Stomach (tissue), 19 donors: ENCODE measurements at regions of chr12 and their contacts with region 1.

Region 1: DNA sequence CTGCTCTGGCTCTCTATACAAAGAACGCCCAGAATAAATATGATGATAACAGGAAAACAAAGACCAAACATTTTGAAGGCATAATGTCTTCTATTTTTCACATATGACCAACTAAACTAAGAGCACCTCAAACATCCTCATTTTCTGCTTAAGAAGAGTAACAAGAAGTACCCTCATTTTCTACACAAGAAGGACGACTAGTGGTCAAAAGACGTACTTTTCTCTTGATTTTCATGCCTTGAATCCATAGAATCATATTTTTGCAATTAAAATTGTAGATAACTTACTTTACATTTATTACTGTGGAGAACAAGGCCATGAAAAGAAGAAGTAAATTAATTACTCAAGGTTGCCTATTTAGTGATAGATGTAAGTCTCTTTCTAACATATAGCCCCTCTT is 358.6 kb downstream of the DUSP6 start:
- DNase-seq: peak in 1 of 2 donors; percentile 80
- H3K4me3 ChIP-seq: no peak overlapping the region
- H3K27ac ChIP-seq: no peak overlapping the region
- H3K4me1 ChIP-seq: peaks cover 0 to 11% (median 0%) of the 10 kb centered on the region in 4 donors
- H3K27me3 ChIP-seq: no peaks in the 10 kb centered on the region
- CTCF ChIP-seq: peak in 5 of 7 experiments; percentile 43 to 71 (median 56)
- EP300 ChIP-seq: no peak
- POLR2A ChIP-seq: no peak

Region 2: GRCh38 chr12:88153959-88154358 is 839.7 kb before region 1 on chr12:
- intact Hi-C with region 1: loop called (anchors 10 kb)
- DNase-seq: peak in 1 of 2 donors; percentile 54
- H3K4me3 ChIP-seq: no peak overlapping the region
- H3K27ac ChIP-seq: no peak overlapping the region
- H3K4me1 ChIP-seq: peaks cover 0 to 8% (median 2%) of the 10 kb centered on the region in 4 donors
- H3K27me3 ChIP-seq: no peaks in the 10 kb centered on the region
- CTCF ChIP-seq: peak in 4 of 7 experiments; percentile 11 to 27 (median 16)
- EP300 ChIP-seq: no peak
- POLR2A ChIP-seq: no peak

Region 3: GRCh38 chr12:89768586-89769486 is 775.2 kb after region 1 on chr12:
- intact Hi-C with region 1: no loop called
- DNase-seq: peak in 1 of 2 donors; percentile 12
- H3K4me3 ChIP-seq: no peak overlapping the region
- H3K27ac ChIP-seq: no peak overlapping the region
- H3K4me1 ChIP-seq: no peaks in the 10 kb centered on the region
- H3K27me3 ChIP-seq: no peaks in the 10 kb centered on the region
- CTCF ChIP-seq: no peak
- EP300 ChIP-seq: no peak
- POLR2A ChIP-seq: no peak

Region 4: DNA sequence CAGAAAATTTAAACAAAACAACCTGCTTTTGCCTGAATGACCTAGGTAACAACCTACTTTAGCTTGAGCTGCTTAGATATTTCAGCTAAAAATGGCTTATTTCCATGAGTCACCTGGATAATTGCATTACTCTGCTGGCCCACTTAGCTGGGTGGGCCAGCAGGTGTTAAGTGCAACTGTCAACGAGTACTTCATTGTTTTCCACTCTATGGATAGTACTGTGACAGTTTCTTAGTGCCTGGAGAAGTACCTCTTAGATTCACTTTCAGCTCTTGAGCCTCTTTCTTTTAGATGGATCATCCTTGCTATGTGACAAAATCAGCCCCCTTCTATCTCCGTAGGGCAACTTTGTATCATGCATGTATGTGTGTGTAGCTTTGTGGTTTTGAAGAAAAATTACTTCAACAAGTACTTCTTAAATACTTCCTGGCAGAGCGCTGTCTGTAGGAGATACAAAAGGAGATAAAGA is 1083.2 kb after region 1 on chr12:
- intact Hi-C with region 1: no loop called
- DNase-seq: no peak
- H3K4me3 ChIP-seq: no peak overlapping the region
- H3K27ac ChIP-seq: no peak overlapping the region
- H3K4me1 ChIP-seq: no peaks in the 10 kb centered on the region
- H3K27me3 ChIP-seq: no peaks in the 10 kb centered on the region
- CTCF ChIP-seq: no peak
- EP300 ChIP-seq: no peak
- POLR2A ChIP-seq: no peak